ENCODE measurements at regions of chr14 and their contacts with region 1.

Region 1: GRCh38 chr14:63770187-63770807 is 42.4 kb upstream of the SGPP1 start:
- DNase-seq: peak; percentile 16
- H3K4me3 ChIP-seq: no peak overlapping the region
- H3K27ac ChIP-seq: no peak overlapping the region
- H3K27me3 ChIP-seq: no peaks in the 10 kb centered on the region
- CTCF ChIP-seq: peak; percentile 77

Region 2: DNA sequence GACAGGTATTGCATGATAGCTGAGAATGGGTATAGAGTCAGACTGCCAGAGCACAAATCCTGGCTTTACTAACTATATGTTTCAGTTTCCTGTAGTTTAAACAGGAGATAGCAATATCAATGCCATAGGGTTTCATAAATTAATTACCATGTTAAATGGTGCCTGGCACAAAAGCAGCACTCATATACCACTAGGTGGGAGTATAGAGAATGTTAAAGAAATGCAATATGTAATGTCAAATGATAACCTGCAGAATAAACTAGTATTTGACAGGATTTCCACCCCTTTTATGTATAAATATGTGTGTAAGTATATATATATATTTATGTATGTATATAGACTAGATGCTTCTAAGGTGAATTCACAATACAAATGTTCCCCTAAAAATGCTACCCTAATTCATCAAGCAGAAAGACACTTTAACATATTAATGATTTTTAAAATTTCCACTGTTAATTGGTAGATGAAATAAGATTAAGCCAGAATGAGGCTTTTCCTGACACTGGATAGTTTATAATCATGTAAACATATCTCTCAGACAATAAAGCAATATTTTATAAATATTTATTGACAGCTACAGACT is 137.3 kb before region 1 on chr14:
- CTCF ChIA-PET with region 1: interaction called, 39 read pairs
- POLR2A ChIA-PET with region 1: no interaction called
- DNase-seq: no peak
- H3K4me3 ChIP-seq: no peak overlapping the region
- H3K27ac ChIP-seq: no peak overlapping the region
- H3K27me3 ChIP-seq: no peaks in the 10 kb centered on the region
- CTCF ChIP-seq: peak; percentile 74

Region 3: DNA sequence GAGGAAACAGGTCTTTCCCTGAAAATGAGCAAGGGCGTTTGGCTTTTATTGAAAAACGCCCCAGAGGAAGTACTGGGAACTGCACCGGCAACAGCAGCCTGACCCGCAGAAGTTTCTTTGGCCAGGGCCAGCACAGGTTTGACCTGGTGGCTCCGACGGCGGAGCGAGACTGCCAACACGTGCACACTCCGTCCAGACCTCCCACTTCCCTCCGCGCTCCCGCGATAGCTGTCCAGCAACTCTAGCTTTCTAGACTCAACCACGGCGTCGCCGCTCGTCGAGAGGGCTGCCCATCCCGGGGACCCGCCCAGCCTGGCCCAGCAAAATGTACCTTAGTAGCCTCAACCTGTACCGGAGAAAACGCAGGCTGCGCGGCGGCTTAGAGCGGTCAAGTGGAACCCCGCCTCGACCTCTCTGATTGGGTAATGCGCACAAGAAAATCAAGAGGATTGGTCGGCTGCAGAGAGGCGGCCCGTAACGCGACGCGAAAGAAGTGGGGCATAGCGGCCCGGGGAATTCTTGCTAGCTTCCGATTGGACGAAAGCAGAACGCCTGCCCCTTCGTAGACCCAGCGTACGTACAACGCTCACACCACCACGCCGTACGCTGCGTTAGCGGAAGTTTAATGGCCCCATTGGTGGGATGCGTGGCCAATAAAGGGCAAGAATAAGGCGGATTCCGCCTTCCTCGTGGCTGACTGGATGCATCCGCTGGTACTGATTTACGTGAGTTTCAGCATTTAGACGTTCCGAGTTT is 128.6 kb before region 1 on chr14 and contains the start of gene WDR89:
- CTCF ChIA-PET with region 1: interaction called, 28 read pairs
- POLR2A ChIA-PET with region 1: no interaction called
- DNase-seq: peak; percentile 99
- H3K4me3 ChIP-seq: peak within 1 kb of the TSS; percentile 92
- H3K27ac ChIP-seq: peak within 1 kb of the TSS; percentile 99
- H3K27me3 ChIP-seq: no peaks in the 10 kb centered on the region
- CTCF ChIP-seq: peak; percentile 75
- polyA plus RNA-seq, gene WDR89: 6.1 and 9.4 TPM in 2 replicates

Region 4: GRCh38 chr14:63727231-63727773 is 43.0 kb before region 1 on chr14:
- CTCF ChIA-PET with region 1: interaction called, 16 read pairs
- POLR2A ChIA-PET with region 1: no interaction called
- DNase-seq: peak; percentile 2
- H3K4me3 ChIP-seq: peak overlapping the region; percentile 96
- H3K27ac ChIP-seq: peak overlapping the region; percentile 52
- H3K27me3 ChIP-seq: no peaks in the 10 kb centered on the region
- CTCF ChIP-seq: no peak

Region 5: DNA sequence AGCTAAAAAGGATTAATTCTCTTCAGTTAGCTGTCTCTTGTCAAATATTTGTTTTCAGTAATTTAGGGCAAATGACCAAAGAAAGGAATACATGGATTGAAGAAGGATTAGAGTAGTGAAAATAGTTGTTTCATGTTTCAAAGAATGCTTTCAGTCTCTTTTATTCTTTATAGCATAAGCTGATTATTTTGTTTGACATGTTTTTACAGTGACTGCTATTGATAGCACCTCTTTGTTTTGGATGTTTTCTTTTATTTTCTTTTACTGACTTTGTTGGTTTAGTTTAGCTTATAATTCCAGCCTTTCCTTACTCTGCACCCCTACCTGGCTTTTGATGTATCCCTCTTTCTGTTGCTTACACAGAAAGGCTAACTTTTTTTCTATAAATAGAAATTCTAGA is 13.1 kb before region 1 on chr14:
- CTCF ChIA-PET with region 1: interaction called, 14 read pairs
- POLR2A ChIA-PET with region 1: interaction called, 15 read pairs
- DNase-seq: no peak
- H3K4me3 ChIP-seq: no peak overlapping the region
- H3K27ac ChIP-seq: no peak overlapping the region
- H3K27me3 ChIP-seq: no peaks in the 10 kb centered on the region
- CTCF ChIP-seq: no peak

Region 6: GRCh38 chr14:64272019-64272418 is 501.7 kb after region 1 on chr14:
- CTCF ChIA-PET with region 1: no interaction called
- POLR2A ChIA-PET with region 1: no interaction called
- DNase-seq: no peak
- H3K4me3 ChIP-seq: no peak overlapping the region
- H3K27ac ChIP-seq: no peak overlapping the region
- H3K27me3 ChIP-seq: no peaks in the 10 kb centered on the region
- CTCF ChIP-seq: no peak